ENCODE measurements at regions of chr2 and their contacts with region 1.

Region 1: GRCh38 chr2:19863303-19864041 is 38.3 kb downstream of the TTC32 start:
- DNase-seq: peak; percentile 62

Region 2: GRCh38 chr2:19362755-19363473 is 500.6 kb before region 1 on chr2:
- in situ Hi-C with region 1: loop called (anchors 25 kb)
- DNase-seq: peak; percentile 93